IMR-90 (cell line): ENCODE measurements at regions of chr14 and their contacts with region 1.

Region 1: DNA sequence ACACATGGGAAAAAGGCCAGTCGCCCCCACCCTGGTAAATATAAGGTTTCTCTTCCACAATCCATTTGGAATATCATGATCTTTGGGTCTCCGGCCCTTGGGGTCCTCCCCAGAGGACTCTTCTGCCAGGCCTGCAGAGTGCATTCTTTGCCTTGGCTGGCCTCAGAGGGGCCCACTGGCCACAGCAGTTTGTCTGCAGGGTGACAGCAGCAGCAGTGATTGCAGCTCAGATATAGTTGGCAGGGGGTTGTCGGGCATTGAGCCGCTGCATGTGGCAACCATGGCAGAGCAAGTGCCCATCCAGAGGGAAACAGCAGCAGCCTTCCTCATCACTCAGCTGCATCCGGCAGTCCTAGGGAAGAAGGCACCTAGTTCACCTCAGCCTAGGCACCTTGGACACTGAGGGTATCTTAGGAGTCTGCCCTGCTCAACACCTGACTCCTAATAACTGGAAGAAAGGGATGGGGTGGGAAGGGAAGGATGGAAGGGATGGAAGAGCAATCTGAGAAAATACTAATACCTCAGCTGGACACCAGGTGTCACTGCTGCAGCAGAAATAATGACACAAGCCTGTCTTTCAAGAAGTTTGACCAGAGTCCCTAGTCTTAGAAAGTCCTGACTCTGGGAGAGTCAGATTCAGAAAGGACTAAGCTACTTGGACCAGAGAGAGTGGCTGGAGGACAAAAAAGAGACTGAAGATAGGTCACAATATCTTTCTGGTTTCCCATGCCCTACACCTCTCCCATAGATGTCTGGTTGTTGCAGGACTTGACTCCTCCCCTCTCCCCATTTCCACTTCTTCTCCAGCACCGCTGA is 8.9 kb downstream of the AJUBA start:
- DNase-seq: peak; percentile 70
- ATAC-seq: peak; percentile 36
- H3K4me3 ChIP-seq: no peak overlapping the region
- H3K27ac ChIP-seq: no peak overlapping the region
- H3K4me1 ChIP-seq: peaks cover 26% of the 10 kb centered on the region
- H3K27me3 ChIP-seq: no peaks in the 10 kb centered on the region
- CTCF ChIP-seq: peak; percentile 71
- POLR2A ChIP-seq: no peak
- RAD21 ChIP-seq: peak; percentile 79

Region 2: GRCh38 chr14:22766456-22767322 is 206.7 kb before region 1 on chr14 and contains the start of gene OXA1L:
- CTCF ChIA-PET with region 1: no interaction called
- POLR2A ChIA-PET with region 1: no interaction called
- dilution Hi-C with region 1: no loop called
- in situ Hi-C with region 1: no loop called
- intact Hi-C with region 1: no loop called
- DNase-seq: peak; percentile 98
- ATAC-seq: peak; percentile 85
- H3K4me3 ChIP-seq: peak within 1 kb of the TSS; percentile 90
- H3K27ac ChIP-seq: peak within 1 kb of the TSS; percentile 92
- H3K4me1 ChIP-seq: peaks cover 5% of the 10 kb centered on the region
- H3K27me3 ChIP-seq: no peaks in the 10 kb centered on the region
- CTCF ChIP-seq: no peak
- POLR2A ChIP-seq: peak; percentile 72
- RAD21 ChIP-seq: no peak
- total RNA-seq, gene OXA1L: 40.0 and 47.3 TPM in 2 replicates

Region 3: GRCh38 chr14:22994762-22995275 is 21.4 kb after region 1 on chr14:
- CTCF ChIA-PET with region 1: interaction called, 12 read pairs
- POLR2A ChIA-PET with region 1: interaction called, 3 read pairs
- dilution Hi-C with region 1: no loop called
- in situ Hi-C with region 1: no loop called
- intact Hi-C with region 1: no loop called
- DNase-seq: peak; percentile 48
- ATAC-seq: peak; percentile 94
- H3K4me3 ChIP-seq: no peak overlapping the region
- H3K27ac ChIP-seq: no peak overlapping the region
- H3K4me1 ChIP-seq: peaks cover 4% of the 10 kb centered on the region
- H3K27me3 ChIP-seq: no peaks in the 10 kb centered on the region; the same call in 1 of the 2 replicates
- CTCF ChIP-seq: peak; percentile 71
- POLR2A ChIP-seq: no peak
- RAD21 ChIP-seq: peak; percentile 71

Region 4: DNA sequence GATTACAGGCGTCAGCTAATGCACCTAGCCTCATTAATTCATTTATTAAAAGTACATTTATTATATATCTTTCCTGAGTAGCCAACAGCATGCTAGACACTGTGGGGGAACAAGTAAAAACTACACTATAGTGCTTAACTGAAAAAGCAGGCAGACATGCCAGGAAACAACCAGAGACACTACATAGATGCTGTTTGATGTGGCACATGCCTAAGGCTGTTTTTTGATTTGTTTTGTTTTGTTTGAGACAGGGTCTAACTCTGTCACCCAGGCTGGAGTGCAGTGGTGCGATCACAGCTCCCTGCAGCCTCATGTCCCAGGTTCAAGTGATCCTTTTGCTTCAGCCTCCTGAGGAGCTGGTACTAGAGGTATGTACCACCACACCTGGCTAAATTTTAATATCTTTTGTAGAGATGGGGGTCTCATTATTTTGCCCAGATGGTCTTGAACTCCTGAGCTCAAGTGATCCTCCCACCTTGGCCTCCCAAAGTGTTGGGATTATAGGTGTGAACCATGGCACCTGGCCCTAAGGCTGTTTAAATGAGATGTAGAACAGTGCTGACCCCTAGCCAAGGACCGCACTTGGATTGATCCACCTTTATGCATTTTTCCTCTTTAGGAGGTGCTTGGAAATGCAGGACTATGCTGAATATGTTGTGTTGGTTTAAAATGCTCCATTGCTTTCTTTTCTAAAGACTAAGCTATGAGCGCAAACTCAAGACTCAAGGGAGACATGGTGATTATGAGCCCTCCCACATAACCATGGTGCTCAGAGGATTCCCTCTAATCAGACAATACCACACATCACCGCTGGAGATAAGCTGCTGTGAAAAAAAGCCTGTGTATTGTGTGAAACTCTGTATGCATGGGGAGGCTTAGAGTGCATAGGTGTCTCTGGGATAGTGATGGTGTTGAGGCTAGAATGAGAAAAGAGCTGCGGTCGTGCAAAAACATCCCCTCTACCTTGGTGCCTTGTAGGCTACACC is 47.0 kb after region 1 on chr14:
- CTCF ChIA-PET with region 1: no interaction called
- POLR2A ChIA-PET with region 1: no interaction called
- dilution Hi-C with region 1: no loop called
- in situ Hi-C with region 1: no loop called
- intact Hi-C with region 1: no loop called
- DNase-seq: no peak
- ATAC-seq: no peak
- H3K4me3 ChIP-seq: no peak overlapping the region
- H3K27ac ChIP-seq: no peak overlapping the region
- H3K4me1 ChIP-seq: peaks cover 4% of the 10 kb centered on the region
- H3K27me3 ChIP-seq: no peaks in the 10 kb centered on the region
- CTCF ChIP-seq: no peak
- POLR2A ChIP-seq: no peak
- RAD21 ChIP-seq: no peak

Region 5: DNA sequence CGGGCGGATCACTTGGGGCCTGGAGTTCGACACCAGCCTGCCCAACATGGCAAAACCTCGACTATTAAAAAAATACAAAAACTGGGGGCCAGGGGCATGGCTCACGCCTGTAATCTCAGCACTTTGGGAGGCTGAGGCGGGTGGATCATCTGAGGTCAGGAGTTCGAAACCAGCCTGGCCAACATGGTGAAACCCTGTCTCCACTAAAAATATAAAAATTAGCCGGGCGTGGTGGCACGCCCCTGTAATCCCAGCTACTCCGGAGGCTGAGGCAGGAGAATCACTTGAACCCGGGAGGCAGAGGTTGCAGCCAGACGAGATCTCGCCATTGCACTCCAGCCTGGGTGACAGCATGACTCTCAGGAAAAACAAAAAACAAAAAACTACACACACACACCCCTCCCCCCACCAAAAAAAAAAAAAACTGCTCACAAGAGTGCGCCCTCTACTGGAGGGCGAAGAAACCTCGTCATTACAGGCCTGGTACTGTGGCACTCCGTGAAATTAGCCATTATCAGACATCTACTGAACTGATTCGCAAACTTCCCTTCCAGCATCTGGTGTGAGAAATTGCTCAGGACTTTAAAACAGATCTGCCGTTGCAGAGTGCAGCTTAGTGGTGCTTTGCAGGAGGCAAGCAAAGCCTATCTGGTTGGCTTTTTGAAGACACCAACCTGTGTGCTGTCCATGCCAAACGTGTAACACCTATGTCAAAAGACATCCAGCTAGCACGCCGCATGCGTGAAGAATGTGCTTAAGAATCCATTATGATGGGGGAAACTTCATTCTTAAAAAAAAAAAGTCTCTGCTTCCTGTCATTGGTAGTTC is 321.5 kb after region 1 on chr14:
- CTCF ChIA-PET with region 1: no interaction called
- POLR2A ChIA-PET with region 1: no interaction called
- dilution Hi-C with region 1: no loop called
- in situ Hi-C with region 1: no loop called
- intact Hi-C with region 1: no loop called
- DNase-seq: peak; percentile 51
- ATAC-seq: peak; percentile 79
- H3K4me3 ChIP-seq: no peak overlapping the region
- H3K27ac ChIP-seq: no peak overlapping the region
- H3K4me1 ChIP-seq: peaks cover 2% of the 10 kb centered on the region
- H3K27me3 ChIP-seq: peaks cover 3% of the 10 kb centered on the region; the same call in 1 of the 2 replicates
- CTCF ChIP-seq: peak; percentile 87
- POLR2A ChIP-seq: no peak
- RAD21 ChIP-seq: peak; percentile 45